ENCODE measurements at regions of chr5 and their contacts with region 1.

Region 1: GRCh38 chr5:65481635-65482295 is at the start of gene ADAMTS6:
- DNase-seq: peak; percentile 59
- H3K4me3 Mint-ChIP-seq: no peak within 1 kb of the TSS
- H3K27ac Mint-ChIP-seq: peak within 1 kb of the TSS; percentile 89
- H3K4me1 Mint-ChIP-seq: peaks cover 9% of the 10 kb centered on the region
- H3K27me3 Mint-ChIP-seq: peaks cover 4% of the 10 kb centered on the region
- total RNA-seq, gene ADAMTS6: 0.86 and 1.3 TPM in 2 replicates

Region 2: DNA sequence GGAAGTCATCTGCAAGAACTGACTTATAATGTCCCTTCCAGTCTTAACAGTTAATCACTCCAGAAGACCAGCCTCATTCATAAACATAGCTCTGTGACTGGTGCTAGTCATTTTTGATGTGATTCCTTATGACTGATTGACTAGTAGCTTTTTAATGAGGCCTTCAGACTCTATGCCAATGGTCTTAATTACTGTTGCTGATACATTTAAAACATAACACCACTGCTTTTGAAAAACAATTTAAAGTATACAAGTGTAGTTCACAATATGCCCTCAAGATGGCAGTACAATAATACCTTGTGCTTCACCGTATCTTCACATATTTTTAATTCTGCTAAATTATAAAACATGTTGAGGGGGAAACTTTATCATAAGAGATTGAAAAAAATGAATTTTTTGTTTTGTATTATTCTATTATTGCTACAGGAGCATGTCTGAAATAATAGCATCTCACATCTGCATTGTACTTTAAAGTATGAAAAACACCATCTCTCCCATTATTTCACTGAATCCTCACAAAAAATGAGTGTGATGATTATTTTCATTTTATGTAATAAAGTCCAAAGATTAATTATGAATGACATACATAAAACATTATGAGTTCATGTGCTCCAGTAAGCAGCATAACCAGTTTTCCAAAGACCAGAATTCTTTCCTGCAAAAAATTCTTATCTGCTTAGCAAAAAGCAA is 846.6 kb before region 1 on chr5:
- intact Hi-C with region 1: loop called (anchors 1 kb)
- DNase-seq: no peak
- H3K4me3 Mint-ChIP-seq: no peak overlapping the region
- H3K27ac Mint-ChIP-seq: no peak overlapping the region
- H3K4me1 Mint-ChIP-seq: peaks cover 7% of the 10 kb centered on the region
- H3K27me3 Mint-ChIP-seq: peaks cover 20% of the 10 kb centered on the region

Region 3: GRCh38 chr5:64784451-64785025 is 697.2 kb before region 1 on chr5:
- intact Hi-C with region 1: loop called (anchors 1 kb)
- DNase-seq: peak; percentile 49
- H3K4me3 Mint-ChIP-seq: no peak overlapping the region
- H3K27ac Mint-ChIP-seq: no peak overlapping the region
- H3K4me1 Mint-ChIP-seq: peaks cover 5% of the 10 kb centered on the region
- H3K27me3 Mint-ChIP-seq: no peaks in the 10 kb centered on the region

Region 4: GRCh38 chr5:64958757-64959391 is 522.9 kb before region 1 on chr5:
- intact Hi-C with region 1: loop called (anchors 1 kb)
- DNase-seq: no peak
- H3K4me3 Mint-ChIP-seq: no peak overlapping the region
- H3K27ac Mint-ChIP-seq: no peak overlapping the region
- H3K4me1 Mint-ChIP-seq: no peaks in the 10 kb centered on the region
- H3K27me3 Mint-ChIP-seq: no peaks in the 10 kb centered on the region

Region 5: DNA sequence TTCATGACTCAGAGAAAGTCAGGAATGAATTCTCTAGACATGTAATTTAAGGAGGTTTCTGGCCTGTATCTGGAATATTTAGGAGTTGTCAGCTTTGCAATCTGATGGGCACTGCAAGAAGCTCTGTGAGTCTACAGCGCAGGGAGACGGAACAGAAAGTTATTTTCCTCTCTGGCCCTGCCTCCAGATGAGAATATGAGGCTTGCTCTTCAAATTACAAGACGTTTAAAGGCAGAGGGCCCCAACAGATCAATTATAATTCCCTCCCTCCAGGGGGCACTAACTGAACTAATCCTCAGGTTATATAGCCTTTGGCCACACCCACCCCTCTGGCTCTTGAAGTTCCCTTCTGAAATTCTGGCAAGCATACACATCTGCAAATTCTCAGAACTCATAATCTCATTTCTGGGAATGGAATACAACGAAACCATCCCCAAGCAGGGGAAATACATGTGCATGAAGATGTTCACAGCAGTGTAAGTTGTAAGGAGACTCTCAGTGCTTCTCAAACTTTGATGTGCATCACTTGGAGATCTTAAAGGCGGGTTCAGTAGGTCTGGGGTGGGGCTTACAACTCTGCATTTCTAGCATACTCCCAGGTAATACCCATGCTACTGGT is 405.4 kb before region 1 on chr5:
- intact Hi-C with region 1: loop called (anchors 1 kb)
- DNase-seq: peak; percentile 44
- H3K4me3 Mint-ChIP-seq: no peak overlapping the region
- H3K27ac Mint-ChIP-seq: no peak overlapping the region
- H3K4me1 Mint-ChIP-seq: peaks cover 21% of the 10 kb centered on the region
- H3K27me3 Mint-ChIP-seq: peaks cover 18% of the 10 kb centered on the region

Region 6: GRCh38 chr5:65190328-65191053 is 291.3 kb before region 1 on chr5:
- intact Hi-C with region 1: loop called (anchors 2 kb)
- DNase-seq: no peak
- H3K4me3 Mint-ChIP-seq: no peak overlapping the region
- H3K27ac Mint-ChIP-seq: peak overlapping the region; percentile 30
- H3K4me1 Mint-ChIP-seq: no peaks in the 10 kb centered on the region
- H3K27me3 Mint-ChIP-seq: peaks cover 4% of the 10 kb centered on the region

Region 7: DNA sequence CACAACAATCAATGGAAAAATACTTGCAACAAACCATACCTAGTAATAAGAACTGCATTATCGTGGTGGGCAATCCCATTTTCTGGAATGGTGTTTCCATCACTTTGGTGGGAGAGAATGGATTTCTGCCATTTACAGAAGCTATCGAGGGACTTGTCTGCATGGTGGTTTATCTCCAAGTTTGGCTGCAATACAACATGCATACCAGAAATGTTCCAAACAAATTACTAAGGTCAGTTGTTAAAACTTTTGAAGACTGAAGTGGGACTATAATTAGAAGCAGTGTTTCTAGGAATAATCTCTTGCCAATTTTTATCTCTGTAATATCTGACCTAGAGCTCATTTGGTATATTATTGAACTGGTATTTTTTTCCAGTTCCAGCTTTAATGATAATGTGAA is 30.3 kb before region 1 on chr5:
- intact Hi-C with region 1: no loop called
- DNase-seq: no peak
- H3K4me3 Mint-ChIP-seq: no peak overlapping the region
- H3K27ac Mint-ChIP-seq: no peak overlapping the region
- H3K4me1 Mint-ChIP-seq: no peaks in the 10 kb centered on the region
- H3K27me3 Mint-ChIP-seq: peaks cover 2% of the 10 kb centered on the region

Region 8: DNA sequence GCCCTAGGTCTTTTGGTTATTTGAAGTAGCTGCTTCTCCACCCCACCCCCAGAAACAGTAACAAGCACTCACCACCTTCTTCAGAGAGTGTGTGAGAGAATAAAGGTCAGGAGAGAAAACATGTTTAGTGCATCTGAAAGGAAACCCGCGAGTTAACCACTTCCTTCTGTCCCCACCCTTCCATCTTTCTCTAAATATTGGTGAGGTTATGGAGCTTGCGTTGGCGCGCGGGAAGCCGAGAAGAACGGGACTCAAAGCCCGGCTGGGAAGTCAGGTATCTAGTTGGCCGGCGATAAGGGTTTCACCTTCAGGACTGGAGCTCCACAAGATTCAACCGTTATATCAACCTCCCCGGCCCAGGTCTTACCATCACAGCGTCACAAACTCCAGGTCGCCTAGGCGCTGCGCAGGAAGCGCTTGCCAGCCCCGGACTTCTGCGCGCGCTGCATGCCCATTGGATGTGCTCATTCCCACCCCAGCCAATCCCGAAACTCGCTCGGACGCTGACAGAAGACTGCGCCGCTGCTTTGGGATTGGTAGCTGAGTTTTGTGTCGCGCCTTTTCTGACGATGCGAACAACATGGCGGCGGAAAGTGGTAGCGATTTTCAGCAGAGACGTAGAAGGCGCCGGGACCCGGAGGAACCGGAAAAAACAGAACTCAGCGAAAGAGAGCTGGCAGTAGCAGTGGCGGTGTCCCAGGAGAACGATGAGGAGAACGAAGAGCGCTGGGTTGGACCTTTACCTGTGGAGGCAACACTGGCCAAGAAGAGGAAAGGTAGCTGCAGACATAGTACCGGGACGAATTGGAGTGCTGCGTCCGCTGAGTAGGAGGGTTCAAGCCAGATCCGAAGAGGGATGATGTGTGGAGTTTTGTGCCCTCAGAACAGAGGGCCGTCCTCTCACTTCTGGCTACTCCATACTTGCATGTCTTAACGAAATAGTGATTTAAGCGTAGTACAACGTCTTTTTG is 81.3 kb after region 1 on chr5 and contains the starts of genes CENPK and PPWD1:
- intact Hi-C with region 1: loop called (anchors 1 kb)
- DNase-seq: peak; percentile 94
- H3K4me3 Mint-ChIP-seq: peak within 1 kb of the TSS; percentile 95
- H3K27ac Mint-ChIP-seq: peak within 1 kb of the TSS; percentile 99
- H3K4me1 Mint-ChIP-seq: peaks cover 53% of the 10 kb centered on the region
- H3K27me3 Mint-ChIP-seq: no peaks in the 10 kb centered on the region
- total RNA-seq, gene CENPK: 81.0 and 85.1 TPM in 2 replicates
- total RNA-seq, gene PPWD1: 63.6 and 65.4 TPM in 2 replicates

Measured in activated T-helper 1 cell treated with anti-CD3 and anti-CD28 coated beads, Interleukin-12 subunit alpha, Interleukin-12 subunit beta, Interleukin-2, Interleukin-4 antibody, amounts not matched to agents 30 ng/mL and 10 ng/mL and 1 ng/mL, durations not matched to agents 14 hours and 24 hours and 36 hours (primary cell).